PC-9 (cell line): ENCODE measurements at regions of chrX and their contacts with region 1.

Region 1: DNA sequence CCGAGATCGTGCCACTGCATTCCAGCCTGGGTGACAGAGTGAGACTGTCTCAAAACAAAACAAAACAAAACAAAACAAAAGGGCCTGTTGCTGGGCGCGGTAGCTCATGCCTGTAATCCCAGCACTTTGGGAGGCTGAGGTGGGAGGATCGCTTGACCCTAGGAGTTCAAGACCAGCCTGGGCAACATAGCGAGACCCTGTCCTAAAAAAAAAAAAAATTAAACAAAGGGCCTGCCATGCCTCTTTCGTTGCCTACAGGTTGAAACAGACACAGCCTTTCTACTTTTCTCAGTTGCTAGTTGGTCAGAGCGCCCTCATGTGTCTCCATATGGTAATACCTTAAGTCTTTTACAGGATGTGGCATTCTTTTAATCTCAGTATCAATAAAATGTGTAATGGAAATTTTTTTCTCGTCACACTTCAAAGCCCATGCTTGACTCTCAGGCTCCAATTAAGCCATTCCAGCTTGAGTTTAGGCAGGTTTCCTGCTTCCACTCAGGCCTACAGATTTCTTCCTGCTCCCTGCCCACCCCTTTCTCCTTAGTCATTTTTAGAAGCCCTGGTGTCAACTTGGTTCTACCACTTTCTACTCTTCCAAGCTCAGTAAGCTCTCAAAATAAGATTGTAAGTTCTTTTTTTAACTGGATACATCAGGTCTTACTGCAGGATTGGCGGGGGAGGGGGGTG is 4.7 kb upstream of the SOWAHD start:
- DNase-seq: peak; percentile 25 to 64
- H3K4me3 ChIP-seq: no peak overlapping the region
- H3K27ac ChIP-seq: no peak overlapping the region
- H3K4me1 ChIP-seq: peaks cover 9% of the 10 kb centered on the region
- H3K27me3 ChIP-seq: no peaks in the 10 kb centered on the region
- CTCF ChIP-seq: peak; percentile 81

Region 2: GRCh38 chrX:118579417-118579816 is 1174.3 kb before region 1 on chrX:
- CTCF ChIA-PET with region 1: no interaction called
- POLR2A ChIA-PET with region 1: interaction called, 11 read pairs
- intact Hi-C with region 1: no loop called
- DNase-seq: no peak
- H3K4me3 ChIP-seq: no peak overlapping the region
- H3K27ac ChIP-seq: no peak overlapping the region
- H3K4me1 ChIP-seq: no peaks in the 10 kb centered on the region
- H3K27me3 ChIP-seq: no peaks in the 10 kb centered on the region
- CTCF ChIP-seq: no peak

Region 3: DNA sequence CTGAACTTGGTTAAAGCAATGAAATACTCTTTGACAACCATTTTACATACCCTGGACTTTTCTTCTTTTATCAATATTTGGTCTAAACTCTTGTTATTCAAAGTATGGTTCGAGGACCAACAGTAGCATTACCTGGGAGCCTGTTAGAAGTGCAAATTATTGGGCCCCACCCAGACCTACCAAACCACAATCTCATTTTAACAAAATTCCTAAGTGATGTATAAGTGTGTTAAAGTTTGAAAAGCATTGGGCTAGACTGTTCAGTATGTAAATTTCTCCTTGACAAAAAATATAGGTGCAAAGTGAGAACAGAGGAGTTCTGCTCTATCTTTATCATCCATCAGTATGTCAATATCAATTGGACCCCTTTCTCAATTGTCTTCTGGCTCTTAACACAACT is 450.6 kb before region 1 on chrX:
- CTCF ChIA-PET with region 1: no interaction called
- POLR2A ChIA-PET with region 1: no interaction called
- intact Hi-C with region 1: no loop called
- DNase-seq: peak; percentile 16 to 79
- H3K4me3 ChIP-seq: peak overlapping the region; percentile 36; the same call in 1 of the 2 replicates
- H3K27ac ChIP-seq: peak overlapping the region; percentile 69
- H3K4me1 ChIP-seq: peaks cover 33% of the 10 kb centered on the region
- H3K27me3 ChIP-seq: no peaks in the 10 kb centered on the region
- CTCF ChIP-seq: no peak

Region 4: GRCh38 chrX:119565107-119565663 is 188.5 kb before region 1 on chrX and contains the start of gene STEEP1:
- CTCF ChIA-PET with region 1: no interaction called
- POLR2A ChIA-PET with region 1: interaction called, 15 read pairs
- intact Hi-C with region 1: no loop called
- DNase-seq: peak; percentile 84 to 92
- H3K4me3 ChIP-seq: peak within 1 kb of the TSS; percentile 89
- H3K27ac ChIP-seq: peak within 1 kb of the TSS; percentile 44; the same call in 1 of the 2 replicates
- H3K4me1 ChIP-seq: peaks cover 13% of the 10 kb centered on the region
- H3K27me3 ChIP-seq: no peaks in the 10 kb centered on the region
- CTCF ChIP-seq: no peak
- total RNA-seq, gene STEEP1: 56.5 and 63.7 TPM in 2 replicates

Region 5: GRCh38 chrX:119784747-119785446 is 31.2 kb after region 1 on chrX:
- CTCF ChIA-PET with region 1: no interaction called
- POLR2A ChIA-PET with region 1: interaction called, 21 read pairs
- intact Hi-C with region 1: no loop called
- DNase-seq: peak; percentile 31 to 58
- H3K4me3 ChIP-seq: peak overlapping the region; percentile 7; the same call in 1 of the 2 replicates
- H3K27ac ChIP-seq: no peak overlapping the region
- H3K4me1 ChIP-seq: peaks cover 26% of the 10 kb centered on the region
- H3K27me3 ChIP-seq: no peaks in the 10 kb centered on the region
- CTCF ChIP-seq: peak; percentile 77

Region 6: DNA sequence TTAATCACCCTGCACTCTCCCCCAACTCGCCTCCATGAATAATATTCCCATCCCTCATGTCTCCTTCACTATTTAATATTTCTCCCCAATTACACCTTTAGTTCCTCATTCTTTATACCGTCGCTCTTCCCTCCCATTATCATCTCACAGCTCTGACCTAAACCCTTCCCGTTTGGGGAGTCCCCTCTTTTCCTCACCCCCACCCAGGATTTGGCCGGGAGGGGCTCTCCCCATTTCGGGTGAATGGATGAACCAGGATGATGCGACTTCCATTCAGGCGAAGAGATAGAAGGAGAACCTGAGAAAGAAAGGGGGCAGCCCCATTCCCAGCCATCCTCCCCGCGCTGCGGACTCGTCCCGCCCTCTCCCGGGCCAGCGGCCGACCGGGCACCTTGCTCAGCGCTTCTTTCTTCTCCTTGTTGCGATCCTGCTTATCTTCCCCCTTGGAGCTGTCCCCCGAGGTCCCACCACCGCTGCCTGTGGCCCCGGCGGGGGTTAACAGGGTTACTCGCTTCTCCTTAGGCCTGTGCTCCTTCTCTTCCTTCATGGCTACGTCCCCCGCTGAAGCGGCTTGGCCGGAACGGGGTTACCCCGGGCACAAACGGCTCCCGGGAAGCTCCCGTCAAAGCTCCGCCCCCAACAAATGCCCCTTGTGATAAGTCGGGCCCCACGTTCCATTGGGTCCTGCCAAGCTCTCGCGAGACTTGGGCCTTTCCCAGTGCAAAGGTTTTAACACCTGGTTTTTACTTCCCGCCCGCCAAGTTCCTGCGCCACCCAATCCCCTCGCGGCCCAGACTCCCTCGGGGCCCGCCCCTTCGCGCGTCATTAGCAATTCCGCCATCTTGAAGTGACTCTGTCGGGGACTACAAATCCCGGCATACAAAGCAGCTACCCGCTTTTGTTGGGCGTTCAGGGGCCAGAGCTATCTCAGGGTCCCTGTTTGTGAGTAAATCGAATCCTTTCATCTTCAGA is 99.0 kb after region 1 on chrX and contains the start of gene UPF3B:
- CTCF ChIA-PET with region 1: interaction called, 4 read pairs
- POLR2A ChIA-PET with region 1: interaction called, 18 read pairs
- intact Hi-C with region 1: no loop called
- DNase-seq: peak; percentile 98 to 99
- H3K4me3 ChIP-seq: peak within 1 kb of the TSS; percentile 89
- H3K27ac ChIP-seq: peak within 1 kb of the TSS; percentile 62
- H3K4me1 ChIP-seq: no peaks in the 10 kb centered on the region
- H3K27me3 ChIP-seq: no peaks in the 10 kb centered on the region
- CTCF ChIP-seq: no peak
- total RNA-seq, gene UPF3B: 19.8 and 24.3 TPM in 2 replicates

Region 7: GRCh38 chrX:120137439-120137838 is 383.7 kb after region 1 on chrX:
- CTCF ChIA-PET with region 1: no interaction called
- POLR2A ChIA-PET with region 1: no interaction called
- intact Hi-C with region 1: no loop called
- DNase-seq: no peak
- H3K4me3 ChIP-seq: no peak overlapping the region
- H3K27ac ChIP-seq: no peak overlapping the region
- H3K4me1 ChIP-seq: no peaks in the 10 kb centered on the region
- H3K27me3 ChIP-seq: no peaks in the 10 kb centered on the region
- CTCF ChIP-seq: peak; percentile 32; the same call in 1 of the 2 replicates